Left cardiac atrium (tissue), 4 donors: ENCODE measurements at regions of chr7 and their contacts with region 1.

Region 1: DNA sequence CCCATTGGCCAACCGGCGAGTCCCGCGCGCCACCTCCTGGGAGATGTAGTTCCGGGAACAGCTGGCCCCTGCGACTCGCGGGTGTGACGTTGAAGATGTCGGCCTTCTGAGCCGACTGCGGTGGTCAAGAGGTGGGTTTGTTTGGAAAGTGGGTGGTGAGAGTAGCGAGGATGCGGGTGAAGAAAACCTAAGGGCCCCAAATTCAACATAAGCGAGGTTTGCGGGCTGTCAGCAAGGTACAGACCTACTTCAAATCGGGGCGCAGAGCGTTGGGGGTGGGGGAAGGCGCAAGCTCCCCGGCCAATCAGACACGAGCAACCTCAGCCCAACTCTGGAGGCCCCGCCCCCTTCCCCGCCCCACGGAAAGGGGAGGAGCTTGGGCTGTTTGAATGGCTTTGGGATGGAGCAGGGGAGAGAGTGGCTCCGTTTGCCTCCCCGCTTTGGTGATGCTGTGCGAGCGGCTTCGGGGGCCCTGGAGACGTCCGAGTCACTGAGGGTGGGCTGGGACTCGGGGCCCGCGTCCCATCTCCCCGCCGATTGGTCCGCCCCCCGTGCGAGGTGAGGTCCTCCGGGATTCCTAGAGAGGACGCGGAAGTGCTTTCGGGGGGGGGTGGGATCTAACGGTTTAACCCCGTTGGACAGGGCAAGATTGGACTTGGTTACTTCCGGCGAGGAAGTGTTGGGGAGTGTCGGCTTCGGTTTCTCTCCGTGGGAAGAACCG is at the start of gene ZKSCAN5:
- DNase-seq: peak; percentile 99
- ATAC-seq: peak; percentile 94 to 96
- total RNA-seq, gene ZKSCAN5: 6.1 to 6.3 TPM

Region 2: DNA sequence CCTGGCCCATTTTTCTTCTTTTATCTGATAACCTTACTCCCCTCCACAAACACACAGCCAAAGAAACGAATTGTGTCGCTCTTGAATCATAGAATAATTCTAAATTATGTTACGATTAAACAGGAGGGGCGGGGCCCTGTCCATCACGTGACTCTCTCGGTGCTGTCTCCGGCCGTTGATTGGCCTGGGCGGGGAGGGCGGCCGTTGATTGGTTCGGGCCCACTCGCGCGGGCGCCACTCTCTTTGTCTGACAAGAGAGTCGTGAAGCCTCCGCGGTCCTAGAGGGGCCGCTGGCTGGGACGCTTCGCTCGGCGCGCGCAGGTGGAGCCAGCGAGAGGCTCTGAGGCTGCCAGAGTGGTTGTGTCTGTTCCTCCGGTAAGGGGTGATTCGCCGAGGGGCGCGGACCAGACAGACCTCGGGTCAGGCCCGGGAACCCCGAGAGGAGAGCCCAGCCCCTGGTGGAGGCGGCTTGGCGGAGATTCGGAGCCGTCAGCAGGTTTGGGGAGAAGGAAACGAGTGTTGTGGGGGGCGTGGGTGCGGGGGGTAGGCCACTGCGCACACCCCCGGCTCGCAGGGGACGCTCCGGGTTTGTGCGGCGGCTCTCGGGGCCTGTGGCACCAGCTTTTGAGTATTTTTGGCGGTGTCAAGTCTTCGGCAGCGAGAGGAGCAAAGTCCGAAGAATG is 32.1 kb before region 1 on chr7 and contains the start of gene ZNF789:
- intact Hi-C with region 1: loop called in 1 of 2 experiments (anchors 2 kb)
- DNase-seq: peak; percentile 99
- ATAC-seq: peak; percentile 99
- total RNA-seq, gene ZNF789: 2.9 to 3.2 TPM

Region 3: GRCh38 chr7:99551767-99552463 is 47.2 kb after region 1 on chr7 and contains the start of gene FAM200A:
- intact Hi-C with region 1: loop called in 1 of 2 experiments (anchors 5 kb)
- DNase-seq: peak; percentile 94
- ATAC-seq: peak; percentile 99 to 100
- total RNA-seq, gene FAM200A: 5.4 to 5.6 TPM

Region 4: DNA sequence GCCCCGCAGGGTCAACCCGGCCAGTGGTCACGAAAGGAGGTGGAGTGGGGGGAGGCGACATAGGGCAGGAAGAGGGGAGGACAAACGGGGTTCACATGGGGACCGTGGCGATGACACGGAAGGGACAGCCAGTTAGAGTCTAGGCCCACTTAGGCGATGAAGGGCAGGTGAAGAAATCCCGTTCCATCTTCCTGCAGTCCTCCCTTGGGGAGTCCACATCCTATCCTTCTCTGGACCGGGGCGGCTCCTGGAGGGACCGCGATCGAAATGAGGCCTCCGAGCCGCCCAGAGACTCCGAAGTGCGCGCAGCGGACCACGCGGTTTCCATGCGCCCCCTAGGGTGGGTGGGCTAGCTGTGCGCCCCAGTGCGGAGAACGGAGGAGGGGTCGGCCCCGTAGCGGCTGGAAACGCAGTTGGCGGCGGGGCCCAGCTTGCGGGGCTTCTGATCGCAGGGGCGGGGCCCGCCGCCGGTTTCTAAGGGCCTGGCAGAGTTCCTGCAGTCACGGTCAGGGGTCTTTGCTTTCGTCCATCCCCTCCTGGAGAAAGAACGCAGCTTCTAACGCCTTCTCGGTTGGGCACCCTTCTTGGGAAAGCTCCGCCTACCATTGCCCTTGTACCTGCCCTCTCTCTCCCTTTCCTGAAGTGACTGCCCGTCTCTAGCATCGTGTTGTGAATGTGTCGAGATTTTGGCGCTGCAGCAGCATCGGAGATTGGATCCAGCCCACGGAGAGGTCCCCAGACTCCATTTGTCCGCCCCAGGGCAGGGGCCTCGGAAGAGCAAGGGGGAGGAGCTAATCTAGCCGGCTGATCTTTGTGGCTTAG is 75.4 kb after region 1 on chr7:
- intact Hi-C with region 1: no loop called
- DNase-seq: peak; percentile 42
- ATAC-seq: peak; percentile 78 to 85